PC-9 (cell line): ENCODE measurements at regions of chr4 and their contacts with region 1.

Region 1: DNA sequence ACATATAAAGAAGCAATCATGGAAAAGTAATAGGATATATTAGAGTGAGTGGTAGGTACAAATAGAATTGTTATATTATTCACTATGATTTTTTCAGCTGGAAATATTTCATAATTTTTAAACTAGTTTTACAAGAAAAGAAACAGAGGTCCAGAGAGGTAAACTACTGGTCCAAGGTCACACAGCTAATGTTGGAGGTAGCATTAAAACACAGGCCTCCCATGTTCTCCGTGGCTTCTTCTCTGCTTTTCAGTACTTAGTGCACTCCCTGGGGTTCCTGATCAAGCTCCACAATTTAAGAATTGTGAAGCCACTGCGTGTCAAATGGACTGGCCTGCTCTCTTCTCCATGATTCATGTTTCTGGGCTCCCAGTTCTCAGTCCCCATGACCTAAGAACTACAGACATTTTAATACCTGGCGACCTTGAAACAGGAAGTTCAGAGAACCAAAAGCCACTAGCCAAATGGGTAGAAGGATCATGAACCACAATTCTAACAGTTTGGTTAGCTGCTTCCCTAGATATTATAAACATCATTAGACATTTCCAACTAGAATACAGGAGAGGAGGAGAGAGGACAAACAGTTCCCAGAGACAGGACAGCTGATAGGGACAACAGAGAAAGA is 172.0 kb upstream of the KLF3 start:
- DNase-seq: no peak
- H3K4me3 ChIP-seq: no peak overlapping the region
- H3K27ac ChIP-seq: no peak overlapping the region
- H3K4me1 ChIP-seq: 0 out of 2 replicates have a peak, but pooled peaks cover 6% of the 10 kb centered on the region
- H3K27me3 ChIP-seq: no peaks in the 10 kb centered on the region
- CTCF ChIP-seq: no peak

Region 2: DNA sequence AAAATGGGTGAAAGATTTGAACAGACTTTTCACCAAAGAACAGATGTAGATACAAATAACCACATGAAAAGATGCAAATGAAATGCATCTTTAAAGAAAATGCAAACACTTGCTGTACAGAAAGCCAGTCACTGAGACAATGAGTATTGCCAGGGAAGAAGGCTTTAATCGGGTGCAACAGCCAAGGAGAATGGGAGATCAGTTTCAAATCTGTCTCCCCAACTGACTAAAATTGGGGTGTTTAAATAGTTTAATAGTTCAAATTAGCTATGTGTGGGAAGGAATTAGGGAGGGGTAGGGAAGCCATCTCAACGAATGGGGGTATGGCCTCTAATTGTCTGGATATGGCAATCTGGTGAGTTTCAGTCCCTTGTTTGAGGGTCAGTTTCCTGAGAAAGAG is 236.4 kb before region 1 on chr4:
- CTCF ChIA-PET with region 1: no interaction called
- POLR2A ChIA-PET with region 1: interaction called, 12 read pairs
- intact Hi-C with region 1: no loop called
- DNase-seq: no peak
- H3K4me3 ChIP-seq: no peak overlapping the region
- H3K27ac ChIP-seq: no peak overlapping the region
- H3K4me1 ChIP-seq: peaks cover 6% of the 10 kb centered on the region; the same call in 1 of the 2 replicates
- H3K27me3 ChIP-seq: no peaks in the 10 kb centered on the region
- CTCF ChIP-seq: no peak